Activated naive CD4-positive, alpha-beta T cell treated with anti-CD3 and anti-CD28 coated beads, Interleukin-2, amount 10 ng/mL, durations not matched to agents 7 days and 5 days (primary cell): ENCODE measurements at regions of chr5 and their contacts with region 1.

Region 1: GRCh38 chr5:177607452-177608192 is 7.7 kb downstream of the B4GALT7 start:
- DNase-seq: peak; percentile 81
- H3K4me3 Mint-ChIP-seq: no peak overlapping the region
- H3K27ac Mint-ChIP-seq: peak overlapping the region; percentile 60
- H3K4me1 Mint-ChIP-seq: peaks cover 2% of the 10 kb centered on the region
- H3K27me3 Mint-ChIP-seq: no peaks in the 10 kb centered on the region

Region 2: DNA sequence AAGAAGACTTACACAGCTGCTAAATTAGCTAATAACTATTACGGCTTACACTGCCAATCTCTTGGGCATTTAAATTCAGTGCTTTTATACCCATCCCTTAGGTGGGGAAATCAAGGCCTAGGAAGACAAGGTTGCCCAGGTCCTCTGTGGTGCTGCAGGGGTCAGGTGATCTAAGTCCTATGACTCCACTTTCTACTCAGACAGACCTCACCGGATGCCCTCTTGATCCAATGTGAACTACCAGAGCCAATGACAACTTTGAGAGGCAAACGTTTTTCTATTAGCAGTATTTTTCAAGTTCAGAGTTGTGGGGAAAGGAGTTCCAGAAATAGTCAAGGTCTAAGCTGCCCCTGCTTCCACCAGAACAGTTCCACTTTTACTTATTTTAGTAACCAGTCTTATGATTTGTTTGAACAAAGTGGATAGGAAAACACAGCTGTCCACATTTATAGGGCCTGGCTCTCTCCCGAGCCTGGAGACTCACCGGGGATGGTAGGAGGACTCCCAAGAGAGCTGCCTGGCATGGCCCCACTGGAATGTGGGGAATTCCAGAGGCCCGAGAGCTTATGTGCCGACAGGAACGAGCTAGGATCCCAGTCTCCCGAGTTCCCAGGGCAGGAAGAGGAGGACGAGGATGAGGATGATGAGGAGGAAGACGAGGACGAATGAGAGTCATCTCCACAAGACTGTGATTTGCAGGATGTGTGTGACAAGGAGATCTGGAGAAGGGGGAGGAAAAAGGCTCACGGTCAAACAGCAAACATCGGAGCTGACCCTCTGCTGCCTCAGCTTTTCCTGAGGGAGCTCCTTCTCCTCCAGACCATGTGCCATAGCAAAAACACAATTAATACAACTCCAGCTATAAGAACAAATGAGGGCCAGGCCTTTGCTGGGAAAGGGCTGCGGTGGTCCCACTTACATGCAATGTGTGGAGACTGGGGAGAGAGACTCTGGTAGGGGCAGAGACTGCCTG is 69.9 kb before region 1 on chr5:
- CTCF ChIA-PET with region 1: no interaction called
- DNase-seq: no peak
- H3K4me3 Mint-ChIP-seq: no peak overlapping the region
- H3K27ac Mint-ChIP-seq: peak overlapping the region; percentile 69
- H3K4me1 Mint-ChIP-seq: no peaks in the 10 kb centered on the region
- H3K27me3 Mint-ChIP-seq: no peaks in the 10 kb centered on the region

Region 3: GRCh38 chr5:177592010-177592834 is 15.4 kb before region 1 on chr5 and contains the start of gene TMED9:
- CTCF ChIA-PET with region 1: interaction called, 11 read pairs
- DNase-seq: peak; percentile 91
- H3K4me3 Mint-ChIP-seq: peak within 1 kb of the TSS; percentile 96
- H3K27ac Mint-ChIP-seq: peak within 1 kb of the TSS; percentile 96
- H3K4me1 Mint-ChIP-seq: peaks cover 30% of the 10 kb centered on the region
- H3K27me3 Mint-ChIP-seq: peaks cover 26% of the 10 kb centered on the region